HEK293 (cell line): ENCODE measurements at regions of chr17 and their contacts with region 1.

Region 1: DNA sequence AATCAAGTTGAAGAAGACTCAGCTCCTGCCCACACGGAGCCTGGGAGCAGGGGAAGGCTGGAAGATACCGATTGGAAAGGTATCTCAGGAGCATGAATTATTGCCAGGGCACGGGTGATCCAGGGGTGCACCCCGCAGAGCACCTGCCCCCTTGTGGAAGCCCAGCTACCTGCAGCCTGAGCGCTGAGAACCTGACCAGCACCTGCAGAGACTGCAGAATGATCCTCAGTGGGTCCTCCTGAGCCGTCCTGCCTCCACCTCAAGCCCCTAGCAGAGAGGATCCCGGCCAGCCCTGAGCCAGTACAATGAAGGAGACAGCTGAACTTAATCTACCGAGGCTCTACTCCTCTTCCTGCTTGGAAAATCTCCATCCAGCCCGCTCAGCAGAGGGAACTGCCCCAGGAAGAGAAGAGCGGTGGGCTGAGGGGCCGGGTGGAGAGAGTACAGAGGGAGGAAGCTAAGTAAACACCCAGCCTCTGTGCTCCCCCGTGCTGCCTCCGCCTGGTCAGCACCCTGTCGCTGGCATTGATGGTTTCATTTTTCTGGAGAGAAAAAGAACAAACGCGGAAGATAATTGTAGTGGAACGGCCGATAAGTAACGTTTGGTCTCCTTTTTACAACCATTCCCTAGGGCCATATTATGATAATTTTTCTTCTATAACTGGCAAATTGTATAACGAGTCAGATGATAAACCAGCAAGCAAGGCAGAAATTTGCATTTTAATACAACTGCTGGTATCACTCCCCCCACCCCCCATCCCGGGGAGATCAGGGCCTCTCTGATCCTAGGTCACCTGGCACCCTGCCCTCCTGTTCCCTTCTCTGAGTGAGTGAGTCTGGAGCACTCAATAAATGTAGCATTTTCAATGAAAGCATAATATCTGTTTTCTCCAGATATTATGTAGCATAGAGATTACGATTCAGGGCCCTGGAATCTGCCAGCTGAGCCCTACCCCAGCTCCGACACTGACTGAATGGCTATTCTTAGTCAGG is 204.5 kb upstream of the RPL38 start:
- H3K4me3 ChIP-seq: no peak overlapping the region
- H3K27ac ChIP-seq: no peak overlapping the region
- H3K4me1 ChIP-seq: no peaks in the 10 kb centered on the region
- CTCF ChIP-seq: peak; percentile 62

Region 2: GRCh38 chr17:73980517-73980916 is 18.4 kb before region 1 on chr17:
- CTCF ChIA-PET with region 1: interaction called, 11 read pairs
- POLR2A ChIA-PET with region 1: no interaction called
- H3K4me3 ChIP-seq: no peak overlapping the region
- H3K27ac ChIP-seq: no peak overlapping the region
- H3K4me1 ChIP-seq: no peaks in the 10 kb centered on the region
- CTCF ChIP-seq: no peak

Region 3: GRCh38 chr17:73986641-73987177 is 12.2 kb before region 1 on chr17:
- CTCF ChIA-PET with region 1: interaction called, 15 read pairs
- POLR2A ChIA-PET with region 1: no interaction called
- H3K4me3 ChIP-seq: no peak overlapping the region
- H3K27ac ChIP-seq: no peak overlapping the region
- H3K4me1 ChIP-seq: no peaks in the 10 kb centered on the region
- CTCF ChIP-seq: no peak

Region 4: GRCh38 chr17:74012465-74012864 is 13.5 kb after region 1 on chr17:
- CTCF ChIA-PET with region 1: interaction called, 11 read pairs
- POLR2A ChIA-PET with region 1: no interaction called
- H3K4me3 ChIP-seq: no peak overlapping the region
- H3K27ac ChIP-seq: no peak overlapping the region
- H3K4me1 ChIP-seq: no peaks in the 10 kb centered on the region
- CTCF ChIP-seq: no peak

Region 5: GRCh38 chr17:74123350-74123749 is 124.4 kb after region 1 on chr17:
- CTCF ChIA-PET with region 1: no interaction called
- POLR2A ChIA-PET with region 1: no interaction called
- H3K4me3 ChIP-seq: no peak overlapping the region
- H3K27ac ChIP-seq: no peak overlapping the region
- H3K4me1 ChIP-seq: no peaks in the 10 kb centered on the region
- CTCF ChIP-seq: no peak